Stomach (tissue), 19 donors: ENCODE measurements at regions of chr16 and their contacts with region 1.

Region 1: DNA sequence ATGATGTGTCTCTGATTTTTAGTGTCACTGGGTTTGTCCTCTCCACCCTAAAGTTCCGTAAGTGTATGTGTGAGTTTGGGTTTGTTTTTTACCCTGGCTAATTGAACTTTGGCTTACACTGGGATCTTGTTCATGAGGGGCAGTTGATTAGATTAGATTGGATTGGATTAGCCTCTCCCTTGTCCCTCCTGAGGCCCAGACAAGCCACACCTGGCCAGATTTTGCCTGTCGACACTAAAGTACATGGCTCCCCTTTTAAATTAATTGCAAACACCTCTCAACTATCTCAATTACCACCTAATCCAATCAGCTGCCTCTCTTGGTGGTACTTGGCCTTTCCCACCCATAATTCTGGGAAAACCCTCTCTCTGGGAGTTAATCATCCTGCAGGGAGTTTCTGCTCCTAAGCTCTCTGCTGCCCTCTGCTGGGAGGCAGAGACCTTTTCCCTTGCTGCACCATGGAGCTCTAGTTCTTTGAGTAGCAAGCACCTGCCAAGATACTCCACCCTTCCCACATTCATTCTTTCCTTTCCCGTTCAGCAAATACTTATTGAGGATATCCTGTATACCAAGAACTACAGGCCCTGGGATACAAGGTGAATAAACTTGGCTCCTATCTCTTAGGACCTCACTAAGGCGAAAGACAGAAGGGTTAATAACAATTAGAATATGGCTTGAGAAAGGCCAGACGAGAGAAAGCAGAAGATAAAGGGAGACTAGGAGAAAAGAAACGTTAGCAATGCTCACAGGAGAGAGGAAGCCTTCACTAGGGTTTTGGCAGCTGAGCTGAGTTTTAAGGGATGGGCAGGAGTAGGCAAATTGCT is 60.0 kb upstream of the MPHOSPH6 start:
- DNase-seq: peak; percentile 84 to 88
- H3K4me3 ChIP-seq: no peak overlapping the region
- H3K27ac ChIP-seq: no peak overlapping the region
- H3K4me1 ChIP-seq: peaks cover 0 to 5% (median 2%) of the 10 kb centered on the region in 4 donors
- H3K27me3 ChIP-seq: no peaks in the 10 kb centered on the region
- CTCF ChIP-seq: peak in 5 of 7 experiments; percentile 81 to 90 (median 88)
- EP300 ChIP-seq: no peak
- POLR2A ChIP-seq: no peak

Region 2: DNA sequence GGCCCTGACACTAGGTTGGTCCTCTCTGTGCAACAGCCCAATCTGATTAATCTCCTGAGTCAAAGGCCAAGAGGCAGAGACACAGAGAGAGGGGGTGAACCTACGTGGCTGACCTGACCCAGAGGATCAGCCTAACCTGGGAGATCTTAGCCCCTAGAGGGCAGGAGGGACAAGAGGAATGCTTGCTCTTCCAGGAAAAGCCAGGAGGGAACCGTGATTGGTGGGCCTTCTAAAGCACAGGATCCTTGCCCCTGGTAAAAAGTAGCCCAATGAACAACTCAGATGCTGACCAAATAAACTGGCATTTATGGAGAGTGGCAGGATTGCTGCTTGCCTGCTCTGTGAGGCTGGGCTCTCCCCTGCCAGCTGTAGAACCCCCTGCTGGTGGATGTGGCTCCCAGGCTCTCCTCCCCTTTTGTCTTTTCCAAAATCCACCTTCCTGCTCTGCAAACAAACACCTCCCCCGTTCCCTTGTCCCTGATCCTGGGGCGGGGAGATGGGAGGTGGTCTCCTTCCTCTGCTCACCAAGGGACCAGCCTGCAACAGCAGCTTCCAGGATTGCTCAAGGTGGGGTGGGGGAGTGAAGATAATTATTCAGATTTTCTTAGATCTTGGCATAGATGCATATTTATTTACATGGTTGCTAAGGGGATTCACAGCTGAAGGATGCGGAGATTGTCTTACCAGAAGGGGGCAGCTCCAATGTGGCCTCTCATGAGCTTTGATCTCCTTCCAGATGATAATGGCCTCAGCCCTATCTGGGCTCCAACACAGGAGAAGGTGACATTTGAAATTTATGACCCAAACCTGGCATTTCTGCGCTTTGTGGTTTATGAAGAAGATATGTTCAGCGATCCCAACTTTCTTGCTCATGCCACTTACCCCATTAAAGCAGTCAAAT is 290.6 kb before region 1 on chr16:
- intact Hi-C with region 1: loop called (anchors 10 kb)
- DNase-seq: peak in 1 of 2 donors; percentile 8
- H3K4me3 ChIP-seq: no peak overlapping the region
- H3K27ac ChIP-seq: no peak overlapping the region
- H3K4me1 ChIP-seq: peaks cover 0 to 15% (median 9%) of the 10 kb centered on the region in 4 donors
- H3K27me3 ChIP-seq: no peaks in the 10 kb centered on the region
- CTCF ChIP-seq: no peak
- EP300 ChIP-seq: no peak
- POLR2A ChIP-seq: no peak

Region 3: GRCh38 chr16:82031116-82032084 is 198.6 kb before region 1 on chr16:
- intact Hi-C with region 1: loop called (anchors 5 kb)
- DNase-seq: peak in 1 of 2 donors; percentile 75
- H3K4me3 ChIP-seq: no peak overlapping the region
- H3K27ac ChIP-seq: no peak overlapping the region
- H3K4me1 ChIP-seq: peaks cover 14 to 30% (median 17%) of the 10 kb centered on the region in 4 donors
- H3K27me3 ChIP-seq: no peaks in the 10 kb centered on the region
- CTCF ChIP-seq: peak in 3 of 7 experiments; percentile 16 to 50 (median 44)
- EP300 ChIP-seq: no peak
- POLR2A ChIP-seq: no peak